ENCODE measurements at regions of chr18 and their contacts with region 1.

Region 1: GRCh38 chr18:55268151-55268601 is 308.9 kb upstream of the CCDC68 start:
- DNase-seq: peak; percentile 37
- H3K4me3 ChIP-seq: no peak overlapping the region
- H3K27ac ChIP-seq: peak overlapping the region; percentile 81
- H3K4me1 ChIP-seq: peaks cover 25% of the 10 kb centered on the region
- CTCF ChIP-seq: no peak

Region 2: DNA sequence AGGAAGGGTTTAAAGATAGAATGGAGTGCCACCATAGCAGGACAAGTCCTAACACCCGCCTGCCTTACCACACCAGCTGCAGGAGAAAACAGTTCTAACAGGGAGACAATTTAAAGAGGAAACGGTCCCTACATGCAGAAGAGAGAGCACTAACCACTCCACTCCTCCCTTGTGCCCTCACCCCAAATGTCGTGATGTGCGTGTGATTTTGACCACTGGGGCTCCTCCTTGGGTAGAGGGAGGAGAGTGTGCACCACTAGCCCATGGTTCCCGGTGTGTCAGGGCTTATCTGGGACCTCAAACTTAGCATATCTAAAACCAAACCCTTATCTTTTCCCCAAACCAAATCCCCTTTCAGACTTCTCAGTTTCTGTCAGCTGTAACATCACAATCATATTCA is 203.4 kb before region 1 on chr18:
- CTCF ChIA-PET with region 1: no interaction called
- POLR2A ChIA-PET with region 1: no interaction called
- intact Hi-C with region 1: no loop called
- DNase-seq: no peak
- H3K4me3 ChIP-seq: no peak overlapping the region
- H3K27ac ChIP-seq: no peak overlapping the region
- H3K4me1 ChIP-seq: no peaks in the 10 kb centered on the region
- CTCF ChIP-seq: no peak

Region 3: DNA sequence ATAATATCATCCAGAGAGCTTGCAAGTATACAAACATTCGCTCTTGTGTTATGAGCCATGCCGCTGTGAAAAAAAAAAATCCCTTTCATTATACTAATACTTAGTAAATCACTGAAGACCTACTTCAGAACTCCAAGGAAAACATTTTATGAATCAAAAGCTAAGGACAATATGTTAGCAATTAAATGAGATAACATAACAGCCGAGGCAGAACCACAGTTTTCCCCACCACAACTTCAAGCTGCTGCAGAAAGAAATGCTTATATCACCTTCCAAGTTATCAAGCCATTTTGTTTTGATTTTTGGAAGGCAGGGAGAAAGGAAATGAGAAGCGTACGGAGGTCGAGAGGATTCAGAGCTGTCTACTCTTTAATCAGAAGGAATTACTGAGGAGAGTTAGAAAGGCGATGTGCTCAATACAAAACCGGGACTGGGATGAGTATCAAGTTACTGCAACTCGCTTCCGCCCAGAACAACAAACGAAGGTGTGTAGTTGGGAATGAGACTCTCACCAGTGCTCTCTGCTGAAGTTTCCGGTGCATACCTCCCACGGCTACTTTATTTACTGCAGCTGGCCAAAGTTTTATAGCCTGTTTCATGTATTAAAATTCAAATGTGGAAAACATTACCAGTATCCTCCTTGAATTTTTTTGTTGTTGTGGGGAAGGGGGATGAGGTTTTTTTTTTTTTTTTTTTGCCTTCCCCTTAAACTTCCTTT is 16.8 kb before region 1 on chr18:
- CTCF ChIA-PET with region 1: no interaction called
- POLR2A ChIA-PET with region 1: no interaction called
- intact Hi-C with region 1: no loop called
- DNase-seq: no peak
- H3K4me3 ChIP-seq: no peak overlapping the region
- H3K27ac ChIP-seq: no peak overlapping the region
- H3K4me1 ChIP-seq: no peaks in the 10 kb centered on the region
- CTCF ChIP-seq: no peak

Region 4: DNA sequence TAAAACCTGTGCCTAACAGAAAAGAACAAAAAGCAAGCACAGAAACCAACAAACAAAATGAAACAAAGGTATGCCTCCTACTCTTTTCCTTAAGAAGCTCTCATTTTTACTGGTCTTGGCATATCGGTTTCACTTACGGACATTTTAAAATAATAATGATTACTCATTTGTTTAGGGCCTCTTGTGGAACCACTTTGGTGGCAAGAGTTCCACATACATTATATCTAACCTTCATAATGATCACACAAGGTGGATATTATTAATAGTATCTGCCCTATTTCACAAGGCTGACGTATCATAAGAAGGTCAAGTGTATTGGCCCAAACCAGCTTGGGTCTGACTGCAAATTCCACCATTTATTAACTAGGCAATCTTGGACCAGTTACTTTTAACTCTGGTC is 15.1 kb after region 1 on chr18:
- CTCF ChIA-PET with region 1: no interaction called
- POLR2A ChIA-PET with region 1: interaction called, 10 read pairs
- intact Hi-C with region 1: no loop called
- DNase-seq: no peak
- H3K4me3 ChIP-seq: no peak overlapping the region
- H3K27ac ChIP-seq: no peak overlapping the region
- H3K4me1 ChIP-seq: no peaks in the 10 kb centered on the region
- CTCF ChIP-seq: no peak

Region 5: GRCh38 chr18:55307505-55307904 is 39.3 kb after region 1 on chr18:
- CTCF ChIA-PET with region 1: no interaction called
- POLR2A ChIA-PET with region 1: no interaction called
- intact Hi-C with region 1: no loop called
- DNase-seq: no peak
- H3K4me3 ChIP-seq: no peak overlapping the region
- H3K27ac ChIP-seq: no peak overlapping the region
- H3K4me1 ChIP-seq: peaks cover 16% of the 10 kb centered on the region
- CTCF ChIP-seq: no peak

Region 6: GRCh38 chr18:55322178-55322735 is 54.1 kb after region 1 on chr18:
- CTCF ChIA-PET with region 1: no interaction called
- POLR2A ChIA-PET with region 1: interaction called, 3 read pairs
- intact Hi-C with region 1: loop called (anchors 2 kb)
- DNase-seq: peak; percentile 70
- H3K4me3 ChIP-seq: peak overlapping the region; percentile 73
- H3K27ac ChIP-seq: peak overlapping the region; percentile 61
- H3K4me1 ChIP-seq: peaks cover 58% of the 10 kb centered on the region
- CTCF ChIP-seq: peak; percentile 26; the same call in 1 of the 2 replicates

Measured in OCI-LY7 (cell line).